HAP-1 (cell line): ENCODE measurements at regions of chr5 and their contacts with region 1.

Region 1: GRCh38 chr5:41869739-41870626 is at the start of gene OXCT1:
- DNase-seq: peak; percentile 77 to 92
- H3K4me3 ChIP-seq: peak within 1 kb of the TSS; percentile 74
- H3K4me1 ChIP-seq: peaks cover 10% of the 10 kb centered on the region
- H3K27me3 ChIP-seq: 0 out of 2 replicates have a peak, but pooled peaks cover 3% of the 10 kb centered on the region

Region 2: GRCh38 chr5:42074353-42074752 is 204.4 kb after region 1 on chr5:
- in situ Hi-C with region 1: no loop called
- DNase-seq: no peak
- H3K4me3 ChIP-seq: no peak overlapping the region
- H3K4me1 ChIP-seq: no peaks in the 10 kb centered on the region
- H3K27me3 ChIP-seq: no peaks in the 10 kb centered on the region

Region 3: GRCh38 chr5:42767491-42768105 is 897.6 kb after region 1 on chr5:
- in situ Hi-C with region 1: loop called (anchors 25 kb)
- DNase-seq: peak in 1 of 2 experiments; percentile 37
- H3K4me3 ChIP-seq: no peak overlapping the region
- H3K4me1 ChIP-seq: no peaks in the 10 kb centered on the region
- H3K27me3 ChIP-seq: 0 out of 2 replicates have a peak, but pooled peaks cover 2% of the 10 kb centered on the region

Region 4: GRCh38 chr5:42889311-42889933 is 1019.4 kb after region 1 on chr5:
- in situ Hi-C with region 1: loop called (anchors 25 kb)
- DNase-seq: peak; percentile 49 to 80
- H3K4me3 ChIP-seq: no peak overlapping the region
- H3K4me1 ChIP-seq: no peaks in the 10 kb centered on the region
- H3K27me3 ChIP-seq: peaks cover 11% of the 10 kb centered on the region